Posterior vena cava (tissue), 2 donors: ENCODE measurements at regions of chr14 and their contacts with region 1.

Region 1: DNA sequence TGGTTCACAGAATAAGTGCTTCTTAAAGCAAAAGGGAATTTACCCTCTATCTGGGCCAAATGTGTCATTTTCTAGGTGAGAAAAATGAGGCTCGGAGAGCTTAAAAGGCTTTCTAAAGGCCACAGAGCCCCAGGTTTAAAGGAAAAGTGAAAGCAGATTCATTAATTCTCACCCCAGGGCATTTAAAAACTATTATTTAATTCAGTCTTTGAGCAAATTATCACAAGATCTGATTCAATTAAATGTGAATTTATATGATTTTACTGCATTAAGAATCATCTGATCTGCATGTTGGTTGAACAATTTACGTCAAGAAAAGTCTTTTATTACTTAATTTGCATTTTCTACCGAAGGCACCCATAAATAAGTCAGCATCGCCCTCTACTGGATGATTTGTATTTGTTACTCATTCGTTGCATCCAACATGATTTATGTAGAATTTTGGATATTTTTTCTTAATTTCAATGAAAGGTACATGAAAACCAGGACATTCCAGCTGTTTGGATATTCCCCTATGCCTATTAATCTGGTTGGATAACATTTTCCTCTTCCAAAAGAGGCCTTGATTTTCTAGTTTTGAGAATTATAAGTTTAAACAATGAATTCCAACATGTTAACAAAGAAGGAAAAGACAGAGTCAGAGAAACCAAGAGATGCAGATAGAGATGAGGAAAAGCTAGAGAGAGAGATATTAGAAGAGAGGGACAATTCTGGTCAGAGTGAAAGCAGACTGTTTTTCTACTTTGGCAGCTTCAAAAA is 19.1 kb upstream of the DHRS7 start:
- DNase-seq: no peak

Region 2: GRCh38 chr14:59964251-59965007 is 219.9 kb before region 1 on chr14:
- intact Hi-C with region 1: loop called in 1 of 2 experiments (anchors 5 kb)
- DNase-seq: no peak

Region 3: DNA sequence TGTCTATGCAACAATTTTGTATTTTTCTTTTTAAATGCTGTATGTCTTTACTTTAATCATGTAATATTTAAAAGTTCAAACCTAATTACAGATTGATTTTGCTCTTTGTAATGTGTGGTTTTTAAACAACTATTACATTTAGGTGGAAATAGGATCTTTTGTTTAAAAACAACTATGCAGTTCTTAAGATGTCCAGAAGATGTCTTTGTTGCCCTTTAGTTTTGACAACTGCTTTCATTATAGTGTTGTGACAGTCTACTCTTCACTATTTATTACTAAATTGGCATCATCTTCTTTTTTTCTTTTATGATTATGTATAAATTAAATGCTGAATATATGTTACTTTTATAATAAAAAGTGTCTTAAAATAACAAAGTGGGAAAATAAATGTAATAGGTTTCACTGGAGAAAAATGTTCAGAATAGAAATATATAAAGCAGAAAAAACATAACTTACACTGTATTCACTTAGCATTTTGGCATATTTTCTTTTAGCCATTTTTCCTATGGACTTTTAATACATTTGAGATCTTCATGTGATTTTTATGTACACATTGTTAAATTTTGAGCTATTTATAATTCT is 119.7 kb before region 1 on chr14:
- intact Hi-C with region 1: loop called (anchors 5 to 10 kb)
- DNase-seq: no peak

Region 4: DNA sequence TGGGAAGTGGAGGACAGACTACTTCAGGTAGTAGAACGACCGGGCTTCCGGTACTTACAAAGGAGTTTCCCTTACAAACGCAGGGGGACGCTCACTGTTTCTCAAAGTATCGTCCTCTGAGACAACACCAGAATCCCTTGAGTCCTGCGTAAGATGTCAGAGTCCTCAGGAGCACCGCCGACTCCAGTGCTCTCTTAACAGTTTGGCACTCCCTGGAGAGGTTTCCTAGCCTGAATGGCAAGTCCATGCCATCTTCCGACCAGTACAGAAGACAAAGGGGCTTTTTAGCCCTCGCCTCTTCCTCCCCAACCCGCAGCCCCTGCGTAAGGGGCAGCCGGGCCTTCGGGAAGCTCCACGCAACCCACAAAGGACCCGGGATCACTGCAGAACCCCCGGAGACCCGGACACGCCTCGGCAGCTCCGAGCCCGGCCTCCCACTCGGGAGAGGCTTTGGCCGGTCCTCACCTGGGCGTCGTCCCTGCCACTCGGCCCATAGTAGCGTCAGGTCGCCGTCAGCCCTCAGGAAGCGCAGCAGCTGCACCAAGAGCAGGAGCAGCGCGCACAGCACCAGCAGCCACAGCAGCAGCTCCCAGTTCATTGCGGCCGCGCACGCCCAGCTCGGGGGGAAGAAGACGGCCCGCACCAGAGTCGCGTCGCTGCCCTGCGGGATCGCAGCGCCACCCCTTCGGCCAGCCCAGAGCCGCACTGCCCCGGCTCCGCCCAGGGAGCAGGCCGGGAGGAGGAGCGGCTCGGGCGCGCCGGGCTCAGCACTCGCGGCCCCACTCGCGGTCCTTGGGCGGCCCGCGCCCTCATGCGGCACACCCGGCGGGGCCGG is 19.4 kb before region 1 on chr14 and contains the start of gene DHRS7:
- intact Hi-C with region 1: no loop called
- DNase-seq: peak; percentile 96
- total RNA-seq, gene DHRS7: 58.3 to 63.9 TPM

Region 5: GRCh38 chr14:60248697-60249318 is 64.5 kb after region 1 on chr14 and contains the start of gene PPM1A:
- intact Hi-C with region 1: no loop called
- DNase-seq: peak; percentile 99
- total RNA-seq, gene PPM1A: 45.3 to 64.2 TPM